Activated CD4-positive, alpha-beta T cell treated with anti-CD3 and anti-CD28 coated beads for 36 hours (primary cell): ENCODE measurements at regions of chr4 and their contacts with region 1.

Region 1: DNA sequence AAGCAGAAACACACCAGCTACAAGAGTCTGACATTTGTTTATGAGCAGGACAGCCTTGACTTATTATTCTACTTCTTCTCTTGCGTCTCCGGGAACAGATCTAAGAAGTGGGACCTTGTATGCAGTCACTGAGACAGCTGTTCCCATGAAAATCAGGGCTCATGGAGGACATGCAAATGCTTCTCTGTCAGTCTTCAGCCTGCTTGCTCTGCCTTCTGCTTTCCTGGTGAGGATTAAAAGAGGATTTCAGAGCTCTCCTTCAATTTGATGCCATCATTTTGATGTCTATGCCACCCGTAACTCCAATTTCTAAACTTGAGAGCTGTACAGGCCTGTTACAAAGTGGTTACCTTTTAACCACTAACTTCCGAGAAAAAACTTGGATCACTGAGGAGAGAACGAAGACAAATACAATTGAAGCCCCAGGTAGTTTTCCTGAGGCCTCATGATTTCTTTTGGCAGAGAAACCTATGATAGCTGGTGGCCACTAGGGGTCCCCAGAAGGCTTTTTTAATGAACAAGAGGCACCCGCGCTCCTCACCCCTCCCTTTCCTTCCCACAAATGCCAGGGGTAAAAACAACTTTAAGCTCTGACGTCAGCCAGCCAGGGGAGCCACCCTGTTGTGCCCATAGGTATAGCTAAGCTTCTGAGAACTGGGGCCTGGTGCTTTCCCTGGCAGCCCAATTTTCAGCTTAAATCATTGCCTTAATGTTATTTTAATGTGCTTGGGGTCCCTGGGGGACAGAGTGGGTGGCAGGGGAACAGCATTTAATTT is 97.0 kb downstream of the DDIT4L start:
- DNase-seq: peak; percentile 94
- ATAC-seq: peak; percentile 94
- H3K4me3 Mint-ChIP-seq: peak overlapping the region; percentile 33
- H3K27ac Mint-ChIP-seq: peak overlapping the region; percentile 94
- H3K4me1 Mint-ChIP-seq: peaks cover 56% of the 10 kb centered on the region
- H3K27me3 Mint-ChIP-seq: peaks cover 1% of the 10 kb centered on the region

Region 2: DNA sequence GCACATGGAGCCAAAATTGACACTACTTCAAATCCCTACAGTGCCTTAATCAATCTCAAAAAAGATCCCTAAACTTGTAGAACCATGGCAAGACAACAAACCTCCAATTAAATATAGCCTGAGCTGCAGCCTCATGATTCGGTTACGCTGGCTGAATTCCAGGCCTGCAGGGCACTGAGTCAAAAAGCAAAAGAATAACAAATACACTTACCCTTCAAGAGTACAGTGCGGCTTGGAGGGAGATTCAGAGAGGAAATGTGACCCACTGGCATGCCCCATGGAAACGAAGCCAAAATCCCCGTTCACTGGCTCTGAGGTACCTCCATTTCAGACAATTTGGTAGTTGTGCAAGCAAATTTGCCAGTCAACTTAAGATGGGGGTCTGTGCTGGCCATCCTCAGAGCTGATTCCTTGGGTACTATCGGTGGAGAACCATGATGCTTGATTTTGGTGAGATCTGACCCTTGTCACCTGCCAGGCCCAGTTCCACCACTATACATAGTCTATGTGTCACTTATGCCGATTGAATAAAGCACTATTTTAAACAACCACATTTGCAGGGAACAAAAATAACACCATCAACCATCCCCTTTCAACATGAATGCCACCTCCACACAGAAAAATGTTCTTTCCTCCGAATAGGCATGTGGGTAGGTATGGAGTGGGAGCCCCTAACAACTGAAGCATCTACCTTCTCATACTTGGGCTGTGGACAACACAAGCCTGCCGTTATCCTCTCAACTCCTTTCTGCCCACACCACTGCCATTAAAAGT is 437.8 kb before region 1 on chr4:
- CTCF ChIA-PET with region 1: no interaction called
- POLR2A ChIA-PET with region 1: no interaction called
- intact Hi-C with region 1: no loop called
- DNase-seq: no peak
- ATAC-seq: no peak
- H3K4me3 Mint-ChIP-seq: no peak overlapping the region
- H3K27ac Mint-ChIP-seq: no peak overlapping the region
- H3K4me1 Mint-ChIP-seq: no peaks in the 10 kb centered on the region
- H3K27me3 Mint-ChIP-seq: peaks cover 2% of the 10 kb centered on the region

Region 3: GRCh38 chr4:100076743-100077142 is 16.5 kb before region 1 on chr4:
- CTCF ChIA-PET with region 1: interaction called, 56 read pairs
- POLR2A ChIA-PET with region 1: no interaction called
- intact Hi-C with region 1: no loop called
- DNase-seq: peak; percentile 37
- ATAC-seq: peak; percentile 97
- H3K4me3 Mint-ChIP-seq: no peak overlapping the region
- H3K27ac Mint-ChIP-seq: no peak overlapping the region
- H3K4me1 Mint-ChIP-seq: peaks cover 24% of the 10 kb centered on the region
- H3K27me3 Mint-ChIP-seq: peaks cover 12% of the 10 kb centered on the region

Region 4: GRCh38 chr4:100569196-100569595 is 475.9 kb after region 1 on chr4:
- CTCF ChIA-PET with region 1: interaction called, 3 read pairs
- POLR2A ChIA-PET with region 1: no interaction called
- intact Hi-C with region 1: loop called in 1 of 2 experiments (anchors 10 kb)
- DNase-seq: peak; percentile 14
- ATAC-seq: peak; percentile 91
- H3K4me3 Mint-ChIP-seq: no peak overlapping the region
- H3K27ac Mint-ChIP-seq: peak overlapping the region; percentile 63
- H3K4me1 Mint-ChIP-seq: peaks cover 21% of the 10 kb centered on the region
- H3K27me3 Mint-ChIP-seq: no peaks in the 10 kb centered on the region

Region 5: DNA sequence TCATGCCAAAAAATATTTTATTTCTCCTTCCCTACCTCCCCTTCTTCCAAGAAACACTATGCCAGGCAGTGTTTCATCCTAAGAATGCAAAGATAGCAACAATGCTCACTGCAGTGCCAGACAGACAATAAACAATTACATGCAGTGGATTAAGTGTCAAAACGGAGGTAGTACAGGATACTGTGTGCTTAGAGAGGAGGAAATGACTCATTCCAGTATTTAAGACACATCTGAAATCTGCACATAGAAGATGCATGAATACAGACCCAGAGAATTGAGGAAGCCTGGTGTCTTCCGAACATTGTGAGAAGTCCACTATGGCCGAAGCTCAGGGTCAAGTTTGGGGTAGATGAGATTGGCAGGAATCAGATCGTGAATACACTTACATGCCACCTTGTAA is 927.7 kb after region 1 on chr4:
- CTCF ChIA-PET with region 1: interaction called, 7 read pairs
- POLR2A ChIA-PET with region 1: no interaction called
- intact Hi-C with region 1: loop called in 1 of 2 experiments (anchors 5 kb)
- DNase-seq: no peak
- ATAC-seq: peak; percentile 70
- H3K4me3 Mint-ChIP-seq: no peak overlapping the region
- H3K27ac Mint-ChIP-seq: peak overlapping the region; percentile 64
- H3K4me1 Mint-ChIP-seq: peaks cover 50% of the 10 kb centered on the region
- H3K27me3 Mint-ChIP-seq: no peaks in the 10 kb centered on the region

Region 6: DNA sequence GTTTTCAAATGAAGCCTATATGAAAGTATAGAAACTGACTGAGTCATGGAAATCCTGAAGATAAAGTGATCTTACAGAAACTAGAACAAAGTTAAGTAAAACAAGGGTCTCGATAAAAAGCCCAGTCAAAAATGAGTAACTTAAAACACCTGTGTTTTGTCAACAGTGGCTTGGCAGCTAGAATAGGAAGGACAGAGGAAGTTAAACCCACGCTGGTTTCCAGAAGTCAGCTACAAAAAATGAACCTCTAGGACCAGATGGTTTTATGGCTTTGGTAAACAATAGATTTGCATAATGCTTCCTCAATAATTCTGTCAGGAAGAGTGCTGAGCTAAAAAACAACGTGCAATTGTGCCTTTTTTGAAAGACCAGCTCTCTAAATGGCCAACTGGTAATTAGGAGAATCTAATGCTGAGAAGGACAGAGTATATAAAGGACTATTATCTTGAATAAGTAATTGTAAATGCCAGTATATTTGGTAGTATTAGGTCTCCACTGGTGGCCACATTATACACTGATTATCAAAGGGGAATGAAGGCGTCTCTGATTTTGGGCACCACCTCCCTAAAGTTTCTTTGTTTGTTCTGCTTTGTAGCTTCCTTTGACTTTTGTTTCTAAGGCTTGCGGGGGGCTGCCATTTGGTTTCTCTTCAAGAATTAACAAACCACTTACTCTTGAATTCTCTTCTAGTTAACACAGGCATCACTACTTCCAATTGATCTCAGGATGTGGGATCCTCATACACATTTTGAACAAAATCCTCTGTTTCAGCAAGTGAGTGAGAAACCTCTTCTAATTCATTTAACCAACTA is 1326.3 kb after region 1 on chr4:
- CTCF ChIA-PET with region 1: no interaction called
- POLR2A ChIA-PET with region 1: no interaction called
- intact Hi-C with region 1: loop called in 1 of 2 experiments (anchors 10 kb)
- DNase-seq: peak; percentile 8
- ATAC-seq: peak; percentile 63
- H3K4me3 Mint-ChIP-seq: no peak overlapping the region
- H3K27ac Mint-ChIP-seq: no peak overlapping the region
- H3K4me1 Mint-ChIP-seq: peaks cover 39% of the 10 kb centered on the region
- H3K27me3 Mint-ChIP-seq: peaks cover 41% of the 10 kb centered on the region